ENCODE measurements at regions of chr6 and their contacts with region 1.

Region 1: DNA sequence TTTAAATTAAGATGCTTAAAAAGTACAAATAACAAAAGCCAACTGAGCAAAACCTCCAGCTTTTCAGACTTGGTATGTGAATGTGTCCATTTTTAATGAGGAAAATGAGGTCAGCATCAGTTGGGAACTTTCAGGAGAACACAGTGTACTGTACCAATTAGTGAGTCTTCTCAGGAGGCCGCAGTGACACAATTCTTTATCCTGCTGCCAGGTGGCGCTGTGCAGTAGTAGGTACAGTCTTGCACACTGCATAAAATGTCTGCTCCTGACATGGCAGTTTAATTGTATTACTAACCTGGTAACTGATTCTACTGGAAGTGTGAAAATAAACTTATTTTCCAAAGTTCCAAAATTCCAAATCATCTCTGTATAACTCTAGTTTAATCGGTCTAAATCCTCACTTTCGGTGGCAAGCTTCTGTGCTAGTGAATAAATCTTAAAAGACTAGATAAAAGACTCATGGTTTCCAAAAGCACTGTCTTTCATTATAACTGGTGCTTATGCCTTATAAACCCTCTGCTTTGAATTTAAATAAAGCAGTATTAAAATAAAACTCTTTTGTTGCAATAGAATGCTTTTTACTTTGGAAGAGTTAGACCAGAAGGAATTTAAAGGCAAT is 214.8 kb upstream of the MMS22L start:
- DNase-seq: peak; percentile 31 to 62
- ATAC-seq: peak; percentile 86

Region 2: GRCh38 chr6:97322811-97323210 is 175.0 kb before region 1 on chr6:
- intact Hi-C with region 1: no loop called
- DNase-seq: no peak
- ATAC-seq: no peak

Region 3: GRCh38 chr6:97765480-97765879 is 267.7 kb after region 1 on chr6:
- intact Hi-C with region 1: no loop called
- DNase-seq: no peak
- ATAC-seq: no peak

Region 4: GRCh38 chr6:97947841-97948240 is 450.0 kb after region 1 on chr6:
- intact Hi-C with region 1: no loop called
- DNase-seq: no peak
- ATAC-seq: no peak

Region 5: GRCh38 chr6:98845211-98846020 is 1347.6 kb after region 1 on chr6:
- intact Hi-C with region 1: loop called in 1 of 2 experiments (anchors 5 kb)
- DNase-seq: peak in 1 of 2 donors; percentile 73
- ATAC-seq: peak; percentile 86

Region 6: DNA sequence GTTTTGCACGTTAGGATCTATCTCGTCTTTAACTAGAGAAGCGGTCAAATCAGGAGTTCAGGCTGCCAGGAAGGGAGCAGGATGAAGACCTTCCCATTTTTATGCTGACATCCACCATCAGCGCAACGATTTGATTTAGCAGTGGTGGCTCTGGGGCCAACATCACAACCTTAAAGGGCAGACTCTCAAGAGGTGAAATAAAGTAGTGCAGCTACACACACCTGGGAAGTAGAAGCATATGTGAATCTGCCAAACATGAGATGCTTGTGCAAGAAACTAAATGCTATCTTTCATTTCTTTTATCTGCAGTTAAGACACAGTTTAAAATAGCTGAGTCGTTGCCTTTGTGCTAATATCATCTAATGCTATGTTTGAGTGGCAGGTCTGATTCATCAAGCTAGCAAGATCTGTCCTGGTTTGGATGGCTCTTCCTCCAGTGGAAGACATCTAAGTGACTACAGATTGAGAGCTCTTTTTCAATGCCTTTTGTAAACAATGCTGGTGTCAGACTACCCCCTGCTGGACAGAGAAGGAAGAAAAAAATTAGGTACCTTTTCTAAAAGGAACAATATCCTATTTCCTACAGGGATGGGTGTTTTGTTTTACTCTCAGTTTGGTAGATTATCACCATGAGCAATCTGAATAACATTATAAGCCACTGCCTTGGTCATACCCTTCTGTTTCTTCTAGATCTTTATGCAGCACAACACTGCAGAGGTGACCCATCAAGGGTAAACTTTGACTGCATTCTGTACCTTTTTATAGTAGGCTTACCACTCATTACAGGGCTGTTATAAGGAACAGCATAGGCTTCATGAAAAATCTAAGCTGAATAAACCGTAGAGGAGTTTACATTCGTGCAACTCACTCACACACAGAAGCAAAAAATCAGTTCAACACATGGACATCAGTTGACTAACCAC is 1621.5 kb after region 1 on chr6:
- intact Hi-C with region 1: loop called in 1 of 2 experiments (anchors 5 kb)
- DNase-seq: no peak
- ATAC-seq: peak; percentile 47

Measured in left colon (tissue), 2 donors.